ENCODE measurements at regions of chr9 and their contacts with region 1.

Region 1: GRCh38 chr9:76451234-76451633 is 7.7 kb upstream of the GCNT1 start:
- DNase-seq: no peak
- ATAC-seq: no peak
- H3K4me3 ChIP-seq: no peak overlapping the region
- H3K27ac ChIP-seq: no peak overlapping the region
- H3K4me1 ChIP-seq: peaks cover 13% of the 10 kb centered on the region
- H3K27me3 ChIP-seq: no peaks in the 10 kb centered on the region
- CTCF ChIP-seq: no peak
- POLR2A ChIP-seq: no peak

Region 2: DNA sequence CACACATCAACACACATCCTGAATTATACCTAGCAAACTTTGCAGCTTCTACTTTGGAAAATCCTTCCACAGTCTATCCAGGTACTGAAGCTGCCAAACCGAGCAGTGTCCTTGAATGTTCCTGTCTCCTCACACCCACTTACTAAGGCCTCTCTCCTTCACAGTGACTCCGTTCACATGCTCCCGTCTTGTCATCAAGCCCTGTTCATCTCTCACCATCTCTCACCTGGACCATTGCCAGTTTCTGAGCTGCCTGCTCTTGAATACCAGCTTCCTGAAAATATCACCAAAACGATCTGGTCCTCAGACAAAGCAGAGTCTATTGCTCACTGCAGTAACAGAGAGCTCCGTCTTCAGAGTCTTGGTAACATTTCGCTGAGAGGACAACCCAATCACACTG is 65.1 kb after region 1 on chr9:
- intact Hi-C with region 1: no loop called
- DNase-seq: peak in 3 of 4 donors; percentile 19 to 31 (median 26)
- ATAC-seq: no peak
- H3K4me3 ChIP-seq: no peak overlapping the region
- H3K27ac ChIP-seq: no peak overlapping the region
- H3K4me1 ChIP-seq: peaks cover 7% of the 10 kb centered on the region
- H3K27me3 ChIP-seq: no peaks in the 10 kb centered on the region
- CTCF ChIP-seq: no peak
- POLR2A ChIP-seq: no peak

Region 3: GRCh38 chr9:76704593-76705204 is 253.5 kb after region 1 on chr9:
- intact Hi-C with region 1: loop called (anchors 5 kb)
- DNase-seq: peak in 1 of 4 donors; percentile 32
- ATAC-seq: peak; percentile 60
- H3K4me3 ChIP-seq: no peak overlapping the region
- H3K27ac ChIP-seq: no peak overlapping the region
- H3K4me1 ChIP-seq: no peaks in the 10 kb centered on the region
- H3K27me3 ChIP-seq: no peaks in the 10 kb centered on the region
- CTCF ChIP-seq: peak in 6 of 7 experiments; percentile 50 to 87 (median 78)
- POLR2A ChIP-seq: no peak